ENCODE measurements at regions of chr5 and their contacts with region 1.

Region 1: DNA sequence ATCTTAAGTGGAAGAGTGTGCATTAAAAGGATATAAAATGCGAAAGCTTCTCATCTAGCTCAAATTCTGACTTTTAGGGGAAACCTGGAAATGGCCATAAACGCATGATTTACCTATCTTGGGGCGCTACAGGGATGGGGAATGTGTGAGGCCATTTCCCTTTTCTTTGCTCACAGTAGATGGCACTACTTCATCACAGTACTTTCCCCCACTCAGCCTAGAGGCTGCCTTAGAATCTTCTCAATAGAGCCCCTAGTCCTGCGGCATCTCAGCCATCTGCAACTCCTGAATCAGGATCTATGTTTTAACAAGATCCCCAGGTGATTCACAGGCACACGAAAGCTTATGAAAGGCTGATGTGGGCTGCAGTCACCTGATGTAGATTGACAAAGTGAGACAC is 110.8 kb downstream of the LHFPL2 start:
- DNase-seq: no peak
- H3K4me3 ChIP-seq: no peak overlapping the region
- H3K27ac ChIP-seq: no peak overlapping the region
- H3K4me1 ChIP-seq: peaks cover 3% of the 10 kb centered on the region
- H3K27me3 ChIP-seq: no peaks in the 10 kb centered on the region
- CTCF ChIP-seq: peak in 2 of 3 donors; percentile 30 to 41
- EP300 ChIP-seq: no peak
- POLR2A ChIP-seq: no peak

Region 2: GRCh38 chr5:78920604-78921003 is 382.8 kb after region 1 on chr5:
- intact Hi-C with region 1: loop called in 1 of 4 experiments (anchors 10 kb)
- DNase-seq: no peak
- H3K4me3 ChIP-seq: no peak overlapping the region
- H3K27ac ChIP-seq: no peak overlapping the region
- H3K4me1 ChIP-seq: no peaks in the 10 kb centered on the region
- H3K27me3 ChIP-seq: no peaks in the 10 kb centered on the region
- CTCF ChIP-seq: no peak
- EP300 ChIP-seq: no peak
- POLR2A ChIP-seq: no peak

Region 3: DNA sequence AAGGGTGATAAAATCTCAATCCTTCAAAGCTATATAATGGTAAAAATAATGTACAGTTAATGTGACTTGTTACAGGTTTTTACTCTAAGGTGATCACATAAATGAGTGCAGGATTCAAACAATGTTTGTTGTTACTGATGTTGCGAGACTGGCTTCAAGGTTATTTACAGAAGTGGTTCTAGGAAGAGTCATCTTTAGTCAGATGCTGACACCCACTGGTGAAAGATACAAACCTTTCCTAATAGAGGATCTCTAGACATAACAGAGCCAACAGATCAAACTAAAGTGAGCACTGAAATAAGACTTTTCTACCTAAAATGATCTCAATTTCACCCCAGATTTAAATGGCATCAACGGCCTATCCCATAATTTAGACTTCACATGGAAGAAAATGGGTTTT is 427.1 kb after region 1 on chr5:
- intact Hi-C with region 1: loop called in 1 of 4 experiments (anchors 5 kb)
- DNase-seq: no peak
- H3K4me3 ChIP-seq: no peak overlapping the region
- H3K27ac ChIP-seq: no peak overlapping the region
- H3K4me1 ChIP-seq: no peaks in the 10 kb centered on the region
- H3K27me3 ChIP-seq: no peaks in the 10 kb centered on the region
- CTCF ChIP-seq: peak; percentile 27 to 80 (median 58)
- EP300 ChIP-seq: no peak
- POLR2A ChIP-seq: no peak

Measured in ovary (tissue), 10 donors.